Heart right ventricle (tissue), 16 donors: ENCODE measurements at regions of chr9 and their contacts with region 1.

Region 1: DNA sequence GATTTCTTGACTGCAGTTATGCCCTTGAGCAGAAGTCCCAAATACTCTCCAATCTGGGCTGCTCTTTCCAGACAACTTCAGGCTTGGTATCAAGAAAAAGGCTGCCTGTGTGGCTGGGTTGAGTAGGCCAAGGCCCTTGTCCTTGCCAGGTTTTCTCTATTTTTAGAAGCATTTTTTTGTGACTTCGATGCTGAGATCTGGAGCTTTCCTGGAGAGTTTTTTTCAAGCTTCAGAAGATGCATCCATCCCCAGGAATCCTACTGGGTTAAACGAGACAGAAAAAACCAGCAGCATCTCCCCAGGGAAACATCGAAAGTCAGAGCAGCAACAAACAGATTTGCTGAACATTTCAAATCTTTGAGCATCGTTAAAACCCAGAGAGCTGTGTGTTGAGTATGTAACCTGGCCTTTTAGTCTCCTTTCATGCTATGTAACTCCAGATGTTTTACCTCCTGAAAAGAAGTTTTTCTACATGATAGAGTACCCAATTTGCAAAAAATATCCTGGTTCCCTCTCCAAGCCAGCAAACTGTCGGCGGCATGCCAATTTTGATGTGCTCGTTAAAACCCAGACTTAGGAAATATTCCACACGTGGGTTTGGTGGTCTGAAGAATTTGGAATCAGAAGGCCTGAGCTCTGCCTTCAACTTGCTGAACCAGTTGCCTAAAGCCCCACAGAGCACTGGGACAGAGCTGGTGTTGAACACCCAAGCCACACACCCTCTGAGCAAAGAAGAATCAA is 98.1 kb upstream of the ALDH1B1 start:
- DNase-seq: no peak
- ATAC-seq: peak in 1 of 8 donors; percentile 51
- H3K4me3 ChIP-seq: no peak overlapping the region
- H3K27ac ChIP-seq: no peak overlapping the region
- H3K4me1 ChIP-seq: peaks cover 0 to 18% (median 8%) of the 10 kb centered on the region in 9 donors
- H3K27me3 ChIP-seq: no peaks in the 10 kb centered on the region
- CTCF ChIP-seq: no peak

Region 2: DNA sequence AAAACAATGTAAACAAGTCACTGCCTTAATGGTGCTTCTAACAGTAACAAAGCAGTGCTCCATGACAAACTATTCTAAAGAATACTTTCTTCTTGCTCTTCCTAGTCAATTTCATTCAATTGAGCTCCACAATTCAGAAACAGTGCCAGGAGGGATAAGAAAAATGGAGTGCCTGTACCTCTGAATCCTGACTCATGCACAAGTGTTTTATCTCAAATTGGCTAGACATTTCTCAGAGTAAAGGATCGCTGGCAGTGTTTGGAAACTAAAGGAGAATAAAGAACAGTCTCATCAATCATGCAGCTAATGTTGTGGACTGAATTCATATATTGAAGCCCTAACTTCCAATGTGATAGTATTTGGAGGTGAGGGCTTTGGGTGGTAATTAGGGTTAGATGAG is 418.0 kb before region 1 on chr9:
- intact Hi-C with region 1: loop called in 1 of 10 experiments (anchors 10 kb)
- DNase-seq: no peak
- ATAC-seq: no peak
- H3K4me3 ChIP-seq: no peak overlapping the region
- H3K27ac ChIP-seq: no peak overlapping the region
- H3K4me1 ChIP-seq: no peaks in the 10 kb centered on the region
- H3K27me3 ChIP-seq: no peaks in the 10 kb centered on the region
- CTCF ChIP-seq: no peak

Region 3: GRCh38 chr9:37963936-37964739 is 330.3 kb before region 1 on chr9:
- intact Hi-C with region 1: no loop called
- DNase-seq: no peak
- ATAC-seq: peak in 6 of 8 donors; percentile 11 to 67 (median 35)
- H3K4me3 ChIP-seq: no peak overlapping the region
- H3K27ac ChIP-seq: peak overlapping the region in 2 of 10 donors; percentile 31 to 64
- H3K4me1 ChIP-seq: peaks cover 2 to 52% (median 34%) of the 10 kb centered on the region in 9 donors
- H3K27me3 ChIP-seq: no peaks in the 10 kb centered on the region
- CTCF ChIP-seq: no peak

Region 4: GRCh38 chr9:38334234-38334633 is 39.8 kb after region 1 on chr9:
- intact Hi-C with region 1: no loop called
- DNase-seq: no peak
- ATAC-seq: no peak
- H3K4me3 ChIP-seq: no peak overlapping the region
- H3K27ac ChIP-seq: no peak overlapping the region
- H3K4me1 ChIP-seq: peaks cover 0 to 8% (median 0%) of the 10 kb centered on the region in 9 donors
- H3K27me3 ChIP-seq: peaks cover 0 to 5% (median 0%) of the 10 kb centered on the region in 7 donors
- CTCF ChIP-seq: peak in 6 of 9 donors; percentile 27 to 42 (median 34)

Region 5: DNA sequence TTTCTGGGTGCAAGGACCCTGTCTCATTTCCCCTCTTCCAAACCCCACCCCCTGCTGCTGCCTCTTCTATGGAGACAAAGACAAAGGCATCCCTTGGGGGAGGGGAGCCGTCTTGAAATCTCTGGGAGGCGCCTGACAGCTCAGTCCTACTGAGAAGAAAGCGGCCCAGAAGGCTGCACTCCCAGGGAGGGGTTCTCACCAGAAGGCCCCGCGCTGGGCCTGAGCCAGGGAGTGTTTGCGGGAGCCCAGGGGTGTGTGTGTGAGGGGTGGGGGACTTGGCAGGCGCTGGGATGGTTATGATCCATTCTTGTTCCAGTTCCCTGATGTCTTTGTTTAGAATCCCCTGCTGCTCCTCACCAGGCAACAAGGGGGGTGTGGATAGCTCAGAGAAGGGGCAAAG is 52.4 kb after region 1 on chr9:
- intact Hi-C with region 1: loop called in 1 of 10 experiments (anchors 10 kb)
- DNase-seq: no peak
- ATAC-seq: no peak
- H3K4me3 ChIP-seq: no peak overlapping the region
- H3K27ac ChIP-seq: no peak overlapping the region
- H3K4me1 ChIP-seq: no peaks in the 10 kb centered on the region
- H3K27me3 ChIP-seq: peaks cover 0 to 15% (median 3%) of the 10 kb centered on the region in 7 donors
- CTCF ChIP-seq: no peak